ENCODE measurements at regions of chr4 and their contacts with region 1.

Region 1: DNA sequence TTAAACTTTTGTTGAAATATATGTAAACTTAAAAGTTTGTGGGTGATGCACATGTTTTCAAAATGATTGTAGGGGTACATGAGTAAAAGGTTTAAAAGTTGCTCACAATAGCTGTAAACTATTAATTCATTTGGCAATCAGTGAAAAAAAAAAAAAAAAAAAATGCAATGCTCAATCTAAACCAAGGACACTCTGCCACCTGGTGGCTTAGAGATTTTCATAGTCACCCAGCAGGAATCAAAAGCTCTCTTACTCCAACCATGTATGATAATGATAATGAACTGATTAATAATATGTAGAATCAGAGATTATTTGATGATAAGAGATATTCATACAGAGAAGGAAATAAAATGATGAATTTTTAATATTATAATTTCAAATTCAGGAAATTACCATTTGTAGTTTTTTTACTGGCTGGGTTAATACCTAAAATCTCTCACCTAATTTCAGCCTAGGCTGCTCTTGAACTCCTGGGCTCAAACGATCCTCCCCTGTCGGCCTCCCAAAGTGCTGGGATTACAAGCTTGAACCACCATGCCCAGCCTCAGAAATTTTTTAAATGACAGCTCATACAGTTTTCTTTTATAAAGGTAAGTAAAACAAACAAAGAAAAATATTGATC is 46.9 kb upstream of the SLC25A4 start:
- DNase-seq: no peak
- H3K4me3 ChIP-seq: no peak overlapping the region
- H3K27ac ChIP-seq: no peak overlapping the region
- H3K27me3 ChIP-seq: peaks cover 18% of the 10 kb centered on the region
- CTCF ChIP-seq: peak; percentile 62

Region 2: GRCh38 chr4:184745831-184746795 is 350.0 kb before region 1 on chr4:
- CTCF ChIA-PET with region 1: interaction called, 24 read pairs
- POLR2A ChIA-PET with region 1: no interaction called
- DNase-seq: peak; percentile 58
- H3K4me3 ChIP-seq: no peak overlapping the region
- H3K27ac ChIP-seq: no peak overlapping the region
- H3K27me3 ChIP-seq: no peaks in the 10 kb centered on the region
- CTCF ChIP-seq: peak; percentile 90

Region 3: DNA sequence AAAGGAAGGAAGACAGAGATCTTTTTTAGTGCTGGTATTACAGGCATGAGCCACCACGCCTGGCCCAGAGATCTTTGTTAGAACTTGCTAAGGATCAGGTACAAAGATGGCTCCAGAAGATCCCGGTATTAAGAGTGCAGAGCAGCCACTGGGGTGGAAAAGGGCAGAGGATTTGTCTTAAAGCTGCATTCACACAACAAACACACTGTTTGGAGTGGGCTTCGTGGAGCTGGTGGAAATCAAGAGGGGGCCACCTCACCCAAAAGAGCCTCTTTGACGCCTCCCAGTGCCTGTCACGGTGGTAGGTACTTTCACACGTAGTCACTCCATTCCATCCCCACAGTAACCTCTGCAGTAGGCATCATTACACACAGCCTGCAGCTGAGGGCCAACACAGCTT is 64.5 kb before region 1 on chr4:
- CTCF ChIA-PET with region 1: interaction called, 15 read pairs
- POLR2A ChIA-PET with region 1: no interaction called
- DNase-seq: no peak
- H3K4me3 ChIP-seq: no peak overlapping the region
- H3K27ac ChIP-seq: no peak overlapping the region
- H3K27me3 ChIP-seq: peaks cover 5% of the 10 kb centered on the region
- CTCF ChIP-seq: no peak

Region 4: DNA sequence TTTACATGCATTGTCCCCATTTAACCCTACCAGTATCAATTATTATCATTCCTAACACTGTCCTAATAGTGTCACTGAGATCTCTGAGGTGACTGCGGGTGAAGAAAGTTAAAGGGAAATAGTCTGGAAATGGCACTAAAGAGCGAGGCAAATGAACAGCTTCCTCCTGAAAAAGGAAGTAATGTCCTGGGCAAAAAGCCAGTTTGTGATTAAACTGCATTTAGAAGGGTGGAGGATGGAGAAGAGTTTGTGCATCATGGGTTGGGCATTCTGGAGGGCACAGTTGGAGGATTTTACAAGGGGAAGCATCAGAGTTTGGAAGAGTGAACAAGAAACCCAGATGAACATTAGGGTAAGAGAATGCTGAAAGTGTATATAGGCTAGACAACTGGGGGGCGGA is 13.6 kb before region 1 on chr4:
- CTCF ChIA-PET with region 1: interaction called, 12 read pairs
- POLR2A ChIA-PET with region 1: no interaction called
- DNase-seq: no peak
- H3K4me3 ChIP-seq: no peak overlapping the region
- H3K27ac ChIP-seq: no peak overlapping the region
- H3K27me3 ChIP-seq: peaks cover 4% of the 10 kb centered on the region
- CTCF ChIP-seq: no peak

Region 5: DNA sequence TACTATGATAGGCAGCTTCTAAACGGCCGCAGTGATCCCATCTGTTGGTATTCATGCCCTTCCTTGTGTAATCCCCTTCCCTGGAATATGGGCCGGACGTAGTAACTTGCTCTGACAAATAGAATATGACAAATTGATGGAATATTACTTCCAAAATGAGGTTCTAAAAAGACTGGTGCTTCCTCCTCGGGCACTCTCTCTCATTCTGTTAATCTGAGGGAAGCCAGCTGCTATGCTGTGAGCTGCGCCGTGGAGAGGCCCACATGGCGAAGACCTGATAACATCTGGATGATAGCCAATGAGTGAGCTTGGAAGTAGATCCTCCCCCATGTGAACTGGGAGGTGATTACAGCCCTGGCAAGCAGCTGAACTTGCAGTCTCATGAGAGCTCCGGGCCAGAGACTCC is 19.7 kb after region 1 on chr4:
- CTCF ChIA-PET with region 1: interaction called, 13 read pairs
- POLR2A ChIA-PET with region 1: no interaction called
- DNase-seq: peak; percentile 93
- H3K4me3 ChIP-seq: no peak overlapping the region
- H3K27ac ChIP-seq: no peak overlapping the region
- H3K27me3 ChIP-seq: no peaks in the 10 kb centered on the region
- CTCF ChIP-seq: no peak

Region 6: DNA sequence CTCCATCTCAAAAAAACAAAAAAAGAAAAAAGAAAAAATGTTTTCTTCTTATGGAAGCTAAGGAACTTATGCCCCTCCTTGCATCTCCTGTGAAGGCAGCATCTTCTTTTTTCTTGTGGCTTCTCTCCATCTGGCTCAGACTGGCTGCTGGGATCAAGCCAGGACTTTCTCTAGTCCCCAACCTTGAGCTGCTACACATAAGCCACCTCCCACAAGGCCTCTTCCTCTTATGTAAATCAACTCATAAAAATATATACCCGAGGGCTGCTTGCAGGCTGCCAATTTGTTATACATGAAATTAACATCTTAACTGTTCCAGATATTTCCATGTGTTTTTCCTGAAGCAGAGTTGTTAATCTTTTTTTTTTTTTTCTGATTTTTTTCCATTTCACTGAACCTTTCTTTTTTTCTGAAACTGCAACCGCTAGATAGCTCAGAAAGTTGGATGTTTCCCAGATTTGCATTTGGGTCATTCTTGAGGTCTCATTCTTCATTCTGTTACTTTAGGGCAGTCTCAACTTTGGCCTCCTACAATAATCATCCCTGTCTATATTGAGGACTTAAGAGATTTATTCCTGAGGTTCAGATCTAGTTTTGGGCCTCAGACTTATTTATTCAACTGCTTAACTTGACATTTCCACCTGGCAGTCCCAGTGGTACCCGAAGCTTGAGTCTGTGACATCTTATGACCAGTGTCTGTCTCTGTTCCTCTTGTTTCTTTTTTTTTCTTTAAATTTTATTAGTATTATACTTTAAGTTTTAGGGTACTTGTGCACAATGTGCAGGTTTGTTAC is 123.6 kb after region 1 on chr4:
- CTCF ChIA-PET with region 1: no interaction called
- POLR2A ChIA-PET with region 1: no interaction called
- DNase-seq: no peak
- H3K4me3 ChIP-seq: no peak overlapping the region
- H3K27ac ChIP-seq: peak overlapping the region; percentile 31
- H3K27me3 ChIP-seq: no peaks in the 10 kb centered on the region
- CTCF ChIP-seq: no peak

Region 7: DNA sequence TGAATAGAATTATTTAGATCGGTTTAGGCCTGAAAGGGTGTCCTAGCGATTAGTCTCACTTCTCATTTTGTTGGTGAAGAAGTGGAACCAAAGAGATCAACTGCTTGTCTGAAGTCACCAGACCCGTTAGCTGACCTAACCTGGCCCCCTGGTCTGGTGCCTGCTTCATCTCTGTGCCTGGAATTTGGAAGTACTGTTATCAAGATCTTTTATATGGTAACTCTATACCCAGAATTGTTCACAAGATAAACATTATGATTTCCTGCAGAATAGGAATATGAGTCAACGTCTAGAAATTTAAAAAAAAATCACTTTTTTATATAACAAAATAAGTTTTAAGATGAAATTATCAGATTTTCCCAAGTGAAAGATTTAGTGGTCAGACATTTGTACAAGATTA is 262.4 kb after region 1 on chr4:
- CTCF ChIA-PET with region 1: no interaction called
- POLR2A ChIA-PET with region 1: no interaction called
- DNase-seq: no peak
- H3K4me3 ChIP-seq: no peak overlapping the region
- H3K27ac ChIP-seq: no peak overlapping the region
- H3K27me3 ChIP-seq: no peaks in the 10 kb centered on the region
- CTCF ChIP-seq: no peak

Measured in AG04450 (cell line).